Calu3 (cell line): ENCODE measurements at regions of chr2 and their contacts with region 1.

Region 1: GRCh38 chr2:239927424-239927981 is 97.6 kb downstream of the NDUFA10 start:
- DNase-seq: peak; percentile 66
- H3K4me3 Mint-ChIP-seq: peak overlapping the region; percentile 26
- H3K27ac Mint-ChIP-seq: no peak overlapping the region
- H3K4me1 Mint-ChIP-seq: peaks cover 7% of the 10 kb centered on the region
- H3K27me3 Mint-ChIP-seq: peaks cover 30% of the 10 kb centered on the region
- CTCF ChIP-seq: no peak

Region 2: GRCh38 chr2:239440511-239440959 is 487.0 kb before region 1 on chr2:
- CTCF ChIA-PET with region 1: no interaction called
- intact Hi-C with region 1: no loop called
- DNase-seq: no peak
- H3K4me3 Mint-ChIP-seq: no peak overlapping the region
- H3K27ac Mint-ChIP-seq: no peak overlapping the region
- H3K4me1 Mint-ChIP-seq: peaks cover 17% of the 10 kb centered on the region
- H3K27me3 Mint-ChIP-seq: peaks cover 82% of the 10 kb centered on the region
- CTCF ChIP-seq: no peak

Region 3: DNA sequence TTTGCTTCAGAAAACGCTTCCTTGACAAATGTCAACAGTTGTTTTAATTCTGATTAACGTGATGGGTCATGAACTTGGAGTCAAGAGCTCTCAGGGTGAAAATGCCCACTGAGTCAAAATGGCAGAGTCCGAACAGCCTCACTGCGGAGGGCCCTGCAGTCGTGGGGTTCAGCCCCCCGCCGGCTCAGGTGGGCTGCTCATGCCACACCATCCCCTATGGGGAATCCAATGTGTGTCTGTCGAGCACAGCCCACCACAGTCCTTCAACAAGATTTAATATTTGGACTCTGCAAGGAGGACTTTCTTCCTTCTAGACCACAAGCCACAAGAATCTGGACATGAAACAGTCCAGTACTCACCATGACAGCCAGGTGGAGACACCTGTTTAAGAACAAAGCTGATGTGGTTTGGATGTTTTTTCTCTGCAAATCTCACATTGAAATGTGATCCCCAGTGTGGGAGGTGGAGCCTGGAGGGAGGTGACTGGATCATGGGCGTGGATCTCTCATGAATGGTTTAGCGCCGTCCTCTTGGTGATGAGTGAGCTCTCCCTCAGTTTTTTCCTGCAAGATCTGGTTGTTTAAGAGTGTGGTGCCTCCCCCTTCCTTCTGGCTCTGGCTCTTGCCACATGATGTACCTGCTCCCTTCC is 103.3 kb before region 1 on chr2:
- CTCF ChIA-PET with region 1: interaction called, 11 read pairs
- intact Hi-C with region 1: no loop called
- DNase-seq: peak; percentile 59
- H3K4me3 Mint-ChIP-seq: no peak overlapping the region
- H3K27ac Mint-ChIP-seq: no peak overlapping the region
- H3K4me1 Mint-ChIP-seq: no peaks in the 10 kb centered on the region
- H3K27me3 Mint-ChIP-seq: peaks cover 57% of the 10 kb centered on the region
- CTCF ChIP-seq: no peak